ENCODE measurements at regions of chr3 and their contacts with region 1.

Region 1: GRCh38 chr3:32868719-32869512 is 51.1 kb downstream of the TRIM71 start:
- DNase-seq: no peak
- ATAC-seq: no peak
- H3K4me3 ChIP-seq: no peak overlapping the region
- H3K27ac ChIP-seq: no peak overlapping the region
- H3K4me1 ChIP-seq: no peaks in the 10 kb centered on the region
- H3K27me3 ChIP-seq: peaks cover 22% of the 10 kb centered on the region
- CTCF ChIP-seq: no peak
- POLR2A ChIP-seq: no peak
- RAD21 ChIP-seq: no peak

Region 2: GRCh38 chr3:32593903-32594525 is 274.9 kb before region 1 on chr3:
- CTCF ChIA-PET with region 1: no interaction called
- POLR2A ChIA-PET with region 1: interaction called, 12 read pairs
- dilution Hi-C with region 1: no loop called
- in situ Hi-C with region 1: no loop called
- intact Hi-C with region 1: no loop called
- DNase-seq: peak; percentile 56
- ATAC-seq: no peak
- H3K4me3 ChIP-seq: no peak overlapping the region
- H3K27ac ChIP-seq: no peak overlapping the region
- H3K4me1 ChIP-seq: peaks cover 4% of the 10 kb centered on the region; the same call in 1 of the 2 replicates
- H3K27me3 ChIP-seq: peaks cover 1% of the 10 kb centered on the region; the same call in 1 of the 2 replicates
- CTCF ChIP-seq: no peak
- POLR2A ChIP-seq: no peak
- RAD21 ChIP-seq: no peak

Region 3: DNA sequence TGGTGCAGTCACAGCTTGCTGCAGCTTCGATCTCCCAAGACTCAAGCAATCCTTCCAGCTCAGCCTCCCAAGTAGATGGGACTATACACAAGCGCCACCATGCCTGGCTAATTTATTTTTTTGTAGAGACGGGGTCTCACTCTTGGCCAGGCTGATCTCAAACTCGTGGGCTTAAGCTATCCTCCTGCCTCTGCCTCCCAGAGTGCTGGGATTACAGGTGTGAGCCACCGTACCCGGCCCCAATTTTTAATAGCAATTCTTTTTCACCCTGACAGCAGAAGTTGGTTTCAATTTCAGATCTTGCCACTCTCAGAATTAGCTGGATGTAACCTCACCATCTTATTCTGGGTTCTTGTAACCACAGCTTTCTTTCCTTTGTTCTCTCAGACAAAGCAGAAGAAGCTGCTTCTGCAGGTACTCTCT is 13.7 kb after region 1 on chr3:
- CTCF ChIA-PET with region 1: no interaction called
- POLR2A ChIA-PET with region 1: no interaction called
- dilution Hi-C with region 1: no loop called
- in situ Hi-C with region 1: no loop called
- intact Hi-C with region 1: no loop called
- DNase-seq: no peak
- ATAC-seq: no peak
- H3K4me3 ChIP-seq: no peak overlapping the region
- H3K27ac ChIP-seq: no peak overlapping the region
- H3K4me1 ChIP-seq: no peaks in the 10 kb centered on the region
- H3K27me3 ChIP-seq: peaks cover 19% of the 10 kb centered on the region
- CTCF ChIP-seq: no peak
- POLR2A ChIP-seq: no peak
- RAD21 ChIP-seq: no peak

Region 4: DNA sequence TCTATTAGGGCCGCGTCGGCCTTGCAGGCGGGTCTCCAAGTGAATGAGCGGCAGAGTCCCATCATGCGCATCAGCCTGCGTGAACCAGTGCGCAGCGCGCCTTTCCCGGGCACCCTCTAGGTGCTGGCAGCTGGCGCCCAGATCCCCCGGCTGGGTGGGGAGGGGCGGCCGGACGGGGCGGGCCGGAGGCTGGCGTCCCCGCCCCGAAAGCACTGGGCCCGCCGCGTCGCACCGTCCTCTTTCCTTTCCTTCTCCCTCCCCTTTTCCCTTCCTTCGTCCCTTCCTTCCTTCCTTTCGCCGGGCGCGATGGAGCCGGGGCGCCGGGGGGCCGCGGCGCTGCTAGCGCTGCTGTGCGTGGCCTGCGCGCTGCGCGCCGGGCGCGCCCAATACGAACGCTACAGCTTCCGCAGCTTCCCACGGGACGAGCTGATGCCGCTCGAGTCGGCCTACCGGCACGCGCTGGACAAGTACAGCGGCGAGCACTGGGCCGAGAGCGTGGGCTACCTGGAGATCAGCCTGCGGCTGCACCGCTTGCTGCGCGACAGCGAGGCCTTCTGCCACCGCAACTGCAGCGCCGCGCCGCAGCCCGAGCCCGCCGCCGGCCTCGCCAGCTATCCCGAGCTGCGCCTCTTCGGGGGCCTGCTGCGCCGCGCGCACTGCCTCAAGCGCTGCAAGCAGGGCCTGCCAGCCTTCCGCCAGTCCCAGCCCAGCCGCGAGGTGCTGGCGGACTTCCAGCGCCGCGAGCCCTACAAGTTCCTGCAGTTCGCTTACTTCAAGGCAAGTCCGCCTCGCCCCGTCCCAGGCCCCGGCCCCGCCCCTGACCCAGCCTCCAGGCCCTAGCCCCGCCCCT is 245.1 kb after region 1 on chr3 and contains the start of gene CRTAP:
- CTCF ChIA-PET with region 1: no interaction called
- POLR2A ChIA-PET with region 1: no interaction called
- dilution Hi-C with region 1: no loop called
- in situ Hi-C with region 1: no loop called
- intact Hi-C with region 1: no loop called
- DNase-seq: peak; percentile 94
- ATAC-seq: peak; percentile 91
- H3K4me3 ChIP-seq: peak within 1 kb of the TSS; percentile 78
- H3K27ac ChIP-seq: peak within 1 kb of the TSS; percentile 82
- H3K4me1 ChIP-seq: no peaks in the 10 kb centered on the region; the same call in 1 of the 2 replicates
- H3K27me3 ChIP-seq: no peaks in the 10 kb centered on the region
- CTCF ChIP-seq: no peak; the same call in 1 of the 2 replicates
- POLR2A ChIP-seq: no peak
- RAD21 ChIP-seq: no peak
- total RNA-seq, gene CRTAP: 86.9 and 108 TPM in 2 replicates